ENCODE measurements at regions of chr7 and their contacts with region 1.

Region 1: DNA sequence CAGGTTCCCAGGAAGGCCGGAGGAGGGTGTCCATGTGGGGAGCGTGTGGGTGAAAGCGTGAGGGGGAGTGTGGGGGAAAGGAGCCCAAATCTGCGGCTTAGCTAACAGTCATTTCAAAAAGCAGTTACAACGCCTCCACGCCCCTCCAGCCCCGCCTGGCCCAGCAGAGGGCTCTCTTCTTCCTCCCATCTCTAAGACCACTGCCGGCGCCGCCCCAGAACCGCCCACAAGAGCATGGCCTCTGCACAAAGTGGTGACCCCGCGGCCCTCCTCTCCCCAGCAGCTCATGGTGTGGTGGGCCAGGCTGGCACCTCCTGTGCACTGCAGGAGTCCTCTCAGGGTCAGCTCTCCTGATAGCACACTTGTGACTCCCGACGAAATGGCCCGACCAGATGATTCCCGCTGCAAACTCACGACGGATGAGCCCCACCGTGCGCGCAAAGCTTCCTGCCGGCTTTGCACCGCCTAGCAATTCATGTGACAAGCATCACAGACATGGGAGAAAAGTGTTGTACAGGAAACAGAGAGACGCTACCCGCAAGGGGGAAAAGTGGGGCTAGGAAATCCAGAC is 12.4 kb upstream of the HUS1 start:
- DNase-seq: peak; percentile 63 to 86 (median 83)
- ATAC-seq: peak; percentile 99
- H3K4me3 ChIP-seq: peak overlapping the region; percentile 84
- H3K4me3 Mint-ChIP-seq: peak overlapping the region; percentile 85 to 98 (median 94)
- H3K27ac ChIP-seq: peak overlapping the region; percentile 59
- H3K27ac Mint-ChIP-seq: peak overlapping the region; percentile 86 to 99 (median 94)
- H3K4me1 ChIP-seq: peaks cover 12% of the 10 kb centered on the region in 2 donors
- H3K4me1 Mint-ChIP-seq: peaks cover 13 to 24% (median 20%) of the 10 kb centered on the region in 7 donors
- H3K27me3 ChIP-seq: no peaks in the 10 kb centered on the region
- H3K27me3 Mint-ChIP-seq: no peaks in the 10 kb centered on the region

Region 2: DNA sequence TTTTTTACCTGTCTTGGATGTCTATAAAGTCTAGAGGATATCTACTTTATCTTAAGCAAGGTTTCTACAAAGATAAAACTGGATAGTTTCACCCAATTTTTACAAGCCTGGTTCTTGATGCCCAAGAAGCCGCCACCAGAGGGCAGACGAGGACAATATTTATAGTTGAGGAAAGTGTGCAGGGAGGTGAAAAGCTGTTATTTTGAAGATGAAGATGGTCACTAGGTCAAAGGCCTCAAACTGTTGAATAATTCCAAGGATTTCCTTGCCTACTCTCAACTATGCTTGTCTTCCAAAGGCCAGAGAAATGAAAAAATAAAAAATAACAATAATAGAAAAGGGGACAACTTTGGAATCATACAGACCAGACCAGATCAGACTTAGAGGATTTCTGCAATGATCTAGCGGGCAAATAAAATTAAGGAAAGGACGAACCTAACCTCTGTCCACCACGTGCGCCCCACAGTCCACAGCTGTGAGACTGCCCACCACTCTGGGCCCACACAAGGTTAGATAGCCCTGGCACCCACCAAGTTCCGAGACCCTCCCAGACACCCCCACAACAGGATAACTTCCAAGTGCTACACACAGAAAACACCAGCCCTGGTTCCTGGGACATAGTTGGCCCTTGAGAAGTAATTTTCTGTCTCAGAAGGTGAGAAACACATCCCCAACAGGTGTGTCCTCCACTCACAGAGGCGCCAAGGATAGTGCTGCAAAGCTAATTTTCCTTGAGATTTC is 46.4 kb before region 1 on chr7:
- CTCF ChIA-PET with region 1: interaction called, 4 read pairs
- POLR2A ChIA-PET with region 1: no interaction called
- intact Hi-C with region 1: loop called in 1 of 2 experiments (anchors 1 kb)
- DNase-seq: peak; percentile 34 to 69 (median 56)
- ATAC-seq: peak; percentile 54
- H3K4me3 ChIP-seq: no peak overlapping the region
- H3K4me3 Mint-ChIP-seq: no peak overlapping the region
- H3K27ac ChIP-seq: no peak overlapping the region
- H3K27ac Mint-ChIP-seq: no peak overlapping the region
- H3K4me1 ChIP-seq: no peaks in the 10 kb centered on the region
- H3K4me1 Mint-ChIP-seq: no peaks in the 10 kb centered on the region
- H3K27me3 ChIP-seq: no peaks in the 10 kb centered on the region
- H3K27me3 Mint-ChIP-seq: no peaks in the 10 kb centered on the region

Region 3: GRCh38 chr7:47979145-47979831 is 12.5 kb before region 1 on chr7 and contains the start of gene HUS1:
- CTCF ChIA-PET with region 1: interaction called, 7 read pairs
- POLR2A ChIA-PET with region 1: interaction called, 8 read pairs
- intact Hi-C with region 1: loop called (anchors 1 kb)
- DNase-seq: peak; percentile 86 to 95 (median 90)
- ATAC-seq: peak; percentile 100
- H3K4me3 ChIP-seq: peak within 1 kb of the TSS; percentile 90
- H3K4me3 Mint-ChIP-seq: peak within 1 kb of the TSS; percentile 81 to 99 (median 94)
- H3K27ac ChIP-seq: peak within 1 kb of the TSS; percentile 94
- H3K27ac Mint-ChIP-seq: peak within 1 kb of the TSS; percentile 93 to 100 (median 99)
- H3K4me1 ChIP-seq: peaks cover 10 to 13% of the 10 kb centered on the region in 2 donors
- H3K4me1 Mint-ChIP-seq: peaks cover 16 to 38% (median 32%) of the 10 kb centered on the region in 7 donors
- H3K27me3 ChIP-seq: no peaks in the 10 kb centered on the region
- H3K27me3 Mint-ChIP-seq: no peaks in the 10 kb centered on the region
- total RNA-seq, gene HUS1: 39.2 to 84.0 (median 79.2) TPM

Region 4: GRCh38 chr7:48035301-48035966 is 43.6 kb after region 1 on chr7 and contains the start of gene C7orf57:
- CTCF ChIA-PET with region 1: no interaction called
- POLR2A ChIA-PET with region 1: no interaction called
- intact Hi-C with region 1: loop called (anchors 1 kb)
- DNase-seq: peak; percentile 80 to 88 (median 83)
- ATAC-seq: peak; percentile 99
- H3K4me3 ChIP-seq: peak within 1 kb of the TSS; percentile 63
- H3K4me3 Mint-ChIP-seq: peak within 1 kb of the TSS; percentile 83 to 92 (median 88)
- H3K27ac ChIP-seq: peak within 1 kb of the TSS; percentile 34
- H3K27ac Mint-ChIP-seq: peak within 1 kb of the TSS in 7 of 9 donors; percentile 71 to 89 (median 80)
- H3K4me1 ChIP-seq: peaks cover 8 to 9% of the 10 kb centered on the region in 2 donors
- H3K4me1 Mint-ChIP-seq: peaks cover 4 to 14% (median 9%) of the 10 kb centered on the region in 7 donors
- H3K27me3 ChIP-seq: peaks cover 0 to 5% of the 10 kb centered on the region in 2 donors
- H3K27me3 Mint-ChIP-seq: peaks cover 9 to 60% (median 22%) of the 10 kb centered on the region in 5 donors
- total RNA-seq, gene C7orf57: 0.17 to 0.80 TPM in 2 of 5 experiments, not detected in the others

Region 5: DNA sequence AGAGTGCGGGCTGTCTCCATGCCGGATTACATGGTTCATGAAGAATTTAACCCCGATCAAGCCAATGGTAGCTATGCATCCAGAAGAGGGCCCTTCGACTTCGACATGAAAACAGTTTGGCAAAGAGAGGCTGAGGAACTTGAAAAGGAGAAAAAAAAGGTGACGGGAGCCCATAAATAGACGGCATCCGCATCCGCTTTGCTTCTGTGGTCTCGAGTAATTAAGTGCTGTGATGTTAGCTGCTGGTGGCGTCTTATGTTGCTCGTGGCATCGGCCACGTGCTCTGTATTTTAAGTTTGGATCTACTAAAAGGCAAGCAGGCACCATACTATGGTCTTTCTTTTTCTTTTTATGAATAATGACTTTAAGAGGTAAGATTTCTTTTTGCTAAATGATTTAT is 54.6 kb after region 1 on chr7:
- CTCF ChIA-PET with region 1: interaction called, 3 read pairs
- POLR2A ChIA-PET with region 1: no interaction called
- intact Hi-C with region 1: loop called in 1 of 2 experiments (anchors 1 kb)
- DNase-seq: peak in 7 of 9 donors; percentile 27 to 71 (median 51)
- ATAC-seq: peak; percentile 81
- H3K4me3 ChIP-seq: no peak overlapping the region
- H3K4me3 Mint-ChIP-seq: peak overlapping the region in 9 of 10 donors; percentile 8 to 72 (median 36)
- H3K27ac ChIP-seq: no peak overlapping the region
- H3K27ac Mint-ChIP-seq: peak overlapping the region in 4 of 9 donors; percentile 28 to 81 (median 72)
- H3K4me1 ChIP-seq: peaks cover 0 to 10% of the 10 kb centered on the region in 2 donors
- H3K4me1 Mint-ChIP-seq: peaks cover 8 to 34% (median 25%) of the 10 kb centered on the region in 7 donors
- H3K27me3 ChIP-seq: no peaks in the 10 kb centered on the region
- H3K27me3 Mint-ChIP-seq: no peaks in the 10 kb centered on the region

Region 6: GRCh38 chr7:48088559-48089045 is 96.8 kb after region 1 on chr7:
- CTCF ChIA-PET with region 1: interaction called, 5 read pairs
- POLR2A ChIA-PET with region 1: interaction called, 17 read pairs
- intact Hi-C with region 1: loop called (anchors 1 kb)
- DNase-seq: peak in 4 of 9 donors; percentile 73 to 89 (median 84)
- ATAC-seq: peak; percentile 15
- H3K4me3 ChIP-seq: peak overlapping the region; percentile 93
- H3K4me3 Mint-ChIP-seq: peak overlapping the region; percentile 80 to 95 (median 92)
- H3K27ac ChIP-seq: peak overlapping the region; percentile 81
- H3K27ac Mint-ChIP-seq: peak overlapping the region; percentile 81 to 98 (median 89)
- H3K4me1 ChIP-seq: peaks cover 24 to 72% of the 10 kb centered on the region in 2 donors
- H3K4me1 Mint-ChIP-seq: peaks cover 50 to 85% (median 74%) of the 10 kb centered on the region in 7 donors
- H3K27me3 ChIP-seq: no peaks in the 10 kb centered on the region
- H3K27me3 Mint-ChIP-seq: no peaks in the 10 kb centered on the region

Region 7: DNA sequence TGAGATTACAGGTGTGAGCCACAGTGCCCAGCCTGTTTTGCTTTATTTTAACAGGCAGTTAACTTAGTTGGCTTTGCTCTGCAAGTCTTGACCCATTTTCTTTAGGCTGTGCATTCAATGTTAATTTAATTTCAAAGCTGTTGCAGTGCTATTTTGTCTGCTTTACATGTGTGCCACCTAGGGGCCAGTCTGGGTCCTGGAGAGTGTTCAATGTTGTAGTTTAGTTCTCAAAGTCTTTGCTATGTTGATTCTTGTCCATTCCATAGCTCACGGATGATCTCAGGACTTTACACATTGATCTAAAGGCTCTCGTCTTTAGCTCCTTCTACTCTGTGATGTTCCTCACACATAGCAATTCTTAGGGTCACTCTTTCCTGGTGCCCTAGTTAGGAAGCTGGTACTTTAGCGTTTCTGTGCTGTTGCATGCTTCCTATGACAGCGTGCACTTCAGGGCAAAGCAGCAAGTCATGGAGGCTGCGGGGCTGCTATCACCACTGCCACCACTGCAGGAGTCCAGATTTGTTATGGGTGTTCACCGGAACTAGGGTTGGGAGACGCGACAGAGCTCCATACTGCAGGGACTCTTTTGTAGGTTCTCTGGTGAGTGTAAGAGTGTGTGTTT is 163.1 kb after region 1 on chr7:
- CTCF ChIA-PET with region 1: no interaction called
- POLR2A ChIA-PET with region 1: no interaction called
- intact Hi-C with region 1: loop called in 1 of 2 experiments (anchors 1 kb)
- DNase-seq: peak in 7 of 9 donors; percentile 4 to 29 (median 13)
- ATAC-seq: peak; percentile 60
- H3K4me3 ChIP-seq: no peak overlapping the region
- H3K4me3 Mint-ChIP-seq: no peak overlapping the region
- H3K27ac ChIP-seq: no peak overlapping the region
- H3K27ac Mint-ChIP-seq: no peak overlapping the region
- H3K4me1 ChIP-seq: no peaks in the 10 kb centered on the region
- H3K4me1 Mint-ChIP-seq: no peaks in the 10 kb centered on the region
- H3K27me3 ChIP-seq: no peaks in the 10 kb centered on the region
- H3K27me3 Mint-ChIP-seq: peaks cover 10 to 32% (median 30%) of the 10 kb centered on the region in 5 donors